ENCODE measurements at regions of chr12 and their contacts with region 1.

Region 1: DNA sequence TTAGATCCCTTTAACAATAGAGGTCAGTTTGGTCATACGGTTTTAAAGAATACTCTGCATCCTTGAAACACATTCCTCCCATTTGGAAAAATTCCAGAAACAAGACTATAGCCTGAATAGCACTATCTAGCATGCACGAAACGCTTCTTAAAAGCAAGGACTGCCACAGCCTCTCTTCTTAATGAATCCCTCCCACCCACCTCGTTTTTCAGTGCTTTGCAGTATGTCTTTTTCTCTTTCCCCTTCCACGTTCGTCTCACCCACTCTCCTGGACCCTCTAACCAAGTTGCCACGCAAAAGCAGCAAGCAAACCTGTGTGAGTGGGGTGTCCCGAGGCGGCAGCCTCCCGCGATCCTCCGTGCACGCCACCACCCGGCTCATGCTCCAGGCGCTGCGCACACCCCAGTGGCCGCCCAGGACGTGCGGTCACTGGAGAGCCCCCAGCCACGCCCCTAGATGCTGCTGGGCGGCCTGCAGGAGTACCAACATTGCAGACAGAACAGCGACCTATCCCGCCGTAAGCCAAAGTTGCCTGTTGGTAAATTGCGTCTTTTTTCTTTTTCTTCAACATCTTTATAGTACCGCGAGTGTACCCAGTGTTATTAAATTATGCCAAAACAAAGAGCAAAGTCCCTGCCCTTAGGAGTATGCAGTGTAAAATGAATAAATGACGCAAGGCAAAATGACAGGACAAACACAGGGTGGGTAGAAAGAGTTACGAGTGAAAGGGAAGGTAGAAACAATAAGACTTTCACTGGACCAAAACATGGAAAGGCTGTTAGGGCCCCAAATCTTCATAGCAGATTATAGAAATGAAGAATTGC is at the start of gene SLC38A4:
- DNase-seq: peak in 4 of 5 donors; percentile 21 to 66 (median 56)
- ATAC-seq: peak in 3 of 4 donors; percentile 81 to 93 (median 92)
- H3K4me3 ChIP-seq: peak within 1 kb of the TSS in 10 of 12 donors; percentile 9 to 42 (median 30)
- H3K27ac ChIP-seq: no peak within 1 kb of the TSS
- H3K4me1 ChIP-seq: peaks cover 0 to 7% (median 0%) of the 10 kb centered on the region in 12 donors
- H3K27me3 ChIP-seq: peaks cover 0 to 55% (median under 1%) of the 10 kb centered on the region in 9 donors
- CTCF ChIP-seq: peak in 4 of 12 donors; percentile 12 to 29 (median 22)
- POLR2A ChIP-seq: no peak
- total RNA-seq, gene SLC38A4: 0.16 to 0.59 (median 0.32) TPM in 7 of 9 donors, not detected in the others

Region 2: DNA sequence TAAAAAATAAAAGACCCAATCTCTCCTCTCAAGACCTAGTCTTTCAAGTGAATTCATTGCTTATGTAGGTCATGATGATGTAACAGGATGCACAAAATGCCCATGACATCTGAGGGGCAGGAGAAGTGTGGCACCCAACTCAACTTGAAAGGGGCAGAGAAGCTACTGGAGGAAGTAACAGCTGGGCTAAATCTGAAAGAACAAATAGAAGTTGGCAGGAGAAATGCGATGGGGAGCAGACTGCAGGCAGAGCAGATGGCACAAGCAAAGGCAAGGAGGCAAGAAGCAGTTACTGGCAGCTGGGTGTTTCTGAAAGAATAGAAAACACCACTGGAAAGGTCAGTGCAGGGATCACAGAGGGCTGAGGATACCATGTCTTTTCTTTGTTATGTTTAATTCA is 14.6 kb before region 1 on chr12:
- intact Hi-C with region 1: no loop called
- DNase-seq: no peak
- ATAC-seq: no peak
- H3K4me3 ChIP-seq: no peak overlapping the region
- H3K27ac ChIP-seq: no peak overlapping the region
- H3K4me1 ChIP-seq: no peaks in the 10 kb centered on the region
- H3K27me3 ChIP-seq: no peaks in the 10 kb centered on the region
- CTCF ChIP-seq: no peak
- POLR2A ChIP-seq: no peak

Region 3: GRCh38 chr12:46847001-46847400 is 21.2 kb after region 1 on chr12:
- intact Hi-C with region 1: loop called in 1 of 10 experiments (anchors 2 kb)
- DNase-seq: no peak
- ATAC-seq: no peak
- H3K4me3 ChIP-seq: no peak overlapping the region
- H3K27ac ChIP-seq: no peak overlapping the region
- H3K4me1 ChIP-seq: no peaks in the 10 kb centered on the region
- H3K27me3 ChIP-seq: no peaks in the 10 kb centered on the region
- CTCF ChIP-seq: no peak
- POLR2A ChIP-seq: no peak

Region 4: GRCh38 chr12:47085815-47086252 is 260.0 kb after region 1 on chr12:
- intact Hi-C with region 1: no loop called
- DNase-seq: no peak
- ATAC-seq: peak in 3 of 4 donors; percentile 52 to 80 (median 66)
- H3K4me3 ChIP-seq: peak overlapping the region in 1 of 12 donors; percentile 4
- H3K27ac ChIP-seq: peak overlapping the region in 2 of 12 donors; percentile 57 to 95
- H3K4me1 ChIP-seq: peaks cover 0 to 75% (median 19%) of the 10 kb centered on the region in 12 donors
- H3K27me3 ChIP-seq: no peaks in the 10 kb centered on the region
- CTCF ChIP-seq: no peak
- POLR2A ChIP-seq: no peak

Measured in heart left ventricle (tissue), 16 donors.